CD8-positive, alpha-beta T cell (primary cell): ENCODE measurements at regions of chr14 and their contacts with region 1.

Region 1: DNA sequence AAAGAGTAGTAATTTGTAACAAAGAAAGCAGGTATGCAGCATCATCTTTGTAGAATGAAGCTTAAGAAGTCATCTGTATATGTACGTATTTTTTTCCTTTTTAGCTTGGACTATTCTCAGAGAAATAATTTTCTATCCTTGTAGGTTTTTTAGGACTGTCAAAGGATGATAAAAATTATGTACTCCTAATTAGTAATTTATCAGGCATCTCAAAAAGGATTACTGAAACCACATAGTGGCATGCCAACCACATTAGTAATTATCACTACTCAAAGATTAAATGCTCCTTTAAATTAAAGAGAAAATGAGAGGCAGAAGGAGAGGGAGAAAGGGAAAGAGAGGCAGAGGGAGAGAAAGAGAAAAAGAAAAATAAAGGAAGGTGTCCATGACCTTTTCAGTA is 17.3 kb downstream of the TTC8 start:
- DNase-seq: no peak
- ATAC-seq: no peak
- H3K4me3 ChIP-seq: no peak overlapping the region
- H3K4me3 Mint-ChIP-seq: no peak overlapping the region
- H3K27ac ChIP-seq: no peak overlapping the region
- H3K27ac Mint-ChIP-seq: no peak overlapping the region
- H3K4me1 ChIP-seq: no peaks in the 10 kb centered on the region
- H3K4me1 Mint-ChIP-seq: no peaks in the 10 kb centered on the region
- H3K27me3 ChIP-seq: no peaks in the 10 kb centered on the region
- H3K27me3 Mint-ChIP-seq: peaks cover 3% of the 10 kb centered on the region
- CTCF ChIP-seq: no peak

Region 2: DNA sequence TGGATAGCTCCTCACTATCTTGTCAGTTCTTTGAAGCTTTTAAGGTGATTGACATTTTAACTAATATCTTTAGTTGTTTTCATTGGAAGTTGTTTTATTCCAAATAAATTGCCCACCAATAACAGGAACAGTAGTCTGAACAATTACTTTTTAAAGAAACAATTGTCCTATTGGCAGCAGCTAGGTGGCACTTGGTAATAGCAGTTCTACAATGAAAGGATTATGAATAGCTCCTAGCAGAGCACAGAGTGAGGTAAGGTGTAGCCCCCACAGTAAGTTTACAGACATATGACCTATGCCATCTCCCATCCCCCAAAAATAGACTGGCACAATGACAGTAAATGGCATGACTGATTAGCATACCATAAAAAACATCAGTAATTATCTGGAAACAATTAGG is 108.4 kb before region 1 on chr14:
- CTCF ChIA-PET with region 1: no interaction called
- POLR2A ChIA-PET with region 1: no interaction called
- intact Hi-C with region 1: loop called in 1 of 2 experiments (anchors 10 kb)
- DNase-seq: no peak
- ATAC-seq: no peak
- H3K4me3 ChIP-seq: no peak overlapping the region
- H3K4me3 Mint-ChIP-seq: no peak overlapping the region
- H3K27ac ChIP-seq: no peak overlapping the region
- H3K27ac Mint-ChIP-seq: no peak overlapping the region
- H3K4me1 ChIP-seq: no peaks in the 10 kb centered on the region
- H3K4me1 Mint-ChIP-seq: no peaks in the 10 kb centered on the region
- H3K27me3 ChIP-seq: no peaks in the 10 kb centered on the region
- H3K27me3 Mint-ChIP-seq: no peaks in the 10 kb centered on the region
- CTCF ChIP-seq: no peak

Region 3: DNA sequence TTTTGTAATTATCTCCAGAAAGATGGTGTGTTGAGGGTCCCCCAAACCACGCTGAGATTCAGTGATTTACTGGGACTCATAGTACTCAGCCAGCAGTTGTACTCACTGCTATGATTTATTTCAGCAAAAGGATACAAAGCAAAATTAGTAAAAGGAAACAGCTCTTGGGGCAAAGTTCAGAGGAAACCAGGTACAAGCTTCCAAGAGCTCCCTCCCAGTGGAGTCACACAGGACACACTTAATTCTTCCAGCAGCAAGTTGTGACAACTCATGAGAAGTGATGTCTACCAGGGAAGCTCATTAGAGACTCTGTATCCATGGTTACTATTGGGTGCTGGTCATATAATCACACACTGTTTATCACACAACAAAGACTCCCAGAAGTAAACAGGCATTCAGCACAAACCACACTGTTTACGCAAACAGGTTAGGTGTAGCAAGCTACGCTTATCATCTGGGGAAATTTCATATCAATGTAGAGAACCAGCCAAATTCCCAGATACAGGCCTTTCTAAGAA is 21.5 kb after region 1 on chr14:
- CTCF ChIA-PET with region 1: no interaction called
- POLR2A ChIA-PET with region 1: no interaction called
- intact Hi-C with region 1: no loop called
- DNase-seq: no peak
- ATAC-seq: no peak
- H3K4me3 ChIP-seq: no peak overlapping the region
- H3K4me3 Mint-ChIP-seq: no peak overlapping the region
- H3K27ac ChIP-seq: no peak overlapping the region
- H3K27ac Mint-ChIP-seq: no peak overlapping the region
- H3K4me1 ChIP-seq: no peaks in the 10 kb centered on the region
- H3K4me1 Mint-ChIP-seq: no peaks in the 10 kb centered on the region
- H3K27me3 ChIP-seq: no peaks in the 10 kb centered on the region
- H3K27me3 Mint-ChIP-seq: no peaks in the 10 kb centered on the region
- CTCF ChIP-seq: no peak